ENCODE measurements at regions of chr5 and their contacts with region 1.

Region 1: DNA sequence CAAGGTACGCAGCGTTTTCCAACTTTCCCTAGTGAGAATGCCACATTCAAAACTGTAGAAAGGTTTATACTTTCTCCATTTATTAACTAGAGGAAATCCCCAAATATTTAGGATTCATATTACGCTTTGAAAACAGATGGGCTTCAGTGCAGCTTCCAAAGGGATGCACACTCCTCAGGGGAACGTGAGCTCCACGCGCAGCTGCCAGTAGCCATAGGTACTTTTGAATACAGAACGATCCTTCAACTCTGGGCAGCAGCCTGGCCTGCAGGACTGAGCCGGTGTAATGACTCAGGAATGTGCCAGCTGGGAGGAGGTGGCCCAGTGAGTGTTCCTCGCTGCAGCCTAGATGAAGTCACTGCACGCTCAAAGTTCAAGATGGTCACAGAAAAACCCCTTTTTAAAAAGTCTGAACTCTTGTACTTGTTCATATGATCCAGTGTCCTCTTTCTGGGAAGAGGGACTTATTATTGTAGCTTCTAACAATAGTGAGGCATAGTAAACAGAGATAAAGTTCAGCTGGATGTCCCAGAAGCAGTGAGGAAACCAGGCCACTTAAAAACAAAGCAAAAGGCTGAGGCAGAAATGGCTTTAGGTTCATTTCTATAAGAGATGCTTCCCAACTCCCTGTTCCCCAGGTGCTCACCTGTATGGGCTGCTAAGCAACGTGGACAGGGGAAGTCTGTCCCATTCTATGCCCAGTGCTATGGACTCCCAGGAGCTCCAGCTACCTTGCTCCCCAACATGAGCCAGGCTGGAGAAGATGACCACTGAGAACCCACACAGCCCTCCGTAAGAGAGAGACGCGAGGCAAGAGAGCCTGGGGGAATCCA is 130.0 kb downstream of the LHFPL2 start:
- DNase-seq: no peak
- H3K4me3 ChIP-seq: no peak overlapping the region
- H3K27ac ChIP-seq: no peak overlapping the region
- H3K4me1 ChIP-seq: peaks cover 0 to 6% (median 2%) of the 10 kb centered on the region in 4 experiments; a peak in 4 of 7 replicates
- H3K27me3 ChIP-seq: no peaks in the 10 kb centered on the region
- CTCF ChIP-seq: no peak
- EP300 ChIP-seq: no peak
- POLR2A ChIP-seq: no peak
- RAD21 ChIP-seq: no peak

Region 2: GRCh38 chr5:78467752-78468357 is 50.7 kb before region 1 on chr5:
- CTCF ChIA-PET with region 1: interaction called, 12 read pairs
- POLR2A ChIA-PET with region 1: no interaction called
- DNase-seq: no peak
- H3K4me3 ChIP-seq: no peak overlapping the region
- H3K27ac ChIP-seq: no peak overlapping the region
- H3K4me1 ChIP-seq: no peaks in the 10 kb centered on the region
- H3K27me3 ChIP-seq: peaks cover 0 to 1% (median 0%) of the 10 kb centered on the region in 4 experiments; a peak in 1 of 7 replicates
- CTCF ChIP-seq: peak in 2 of 3 experiments; percentile 43 to 62; a peak in 2 of 4 replicates
- EP300 ChIP-seq: no peak
- POLR2A ChIP-seq: no peak
- RAD21 ChIP-seq: peak; percentile 66 to 68